Activated T-helper 1 cell treated with anti-CD3 and anti-CD28 coated beads, Interleukin-12 subunit alpha, Interleukin-12 subunit beta, Interleukin-2, Interleukin-4 antibody, amounts not matched to agents 30 ng/mL and 10 ng/mL and 1 ng/mL, durations not matched to agents 14 hours and 24 hours and 36 hours (primary cell): ENCODE measurements at regions of chr19 and their contacts with region 1.

Region 1: DNA sequence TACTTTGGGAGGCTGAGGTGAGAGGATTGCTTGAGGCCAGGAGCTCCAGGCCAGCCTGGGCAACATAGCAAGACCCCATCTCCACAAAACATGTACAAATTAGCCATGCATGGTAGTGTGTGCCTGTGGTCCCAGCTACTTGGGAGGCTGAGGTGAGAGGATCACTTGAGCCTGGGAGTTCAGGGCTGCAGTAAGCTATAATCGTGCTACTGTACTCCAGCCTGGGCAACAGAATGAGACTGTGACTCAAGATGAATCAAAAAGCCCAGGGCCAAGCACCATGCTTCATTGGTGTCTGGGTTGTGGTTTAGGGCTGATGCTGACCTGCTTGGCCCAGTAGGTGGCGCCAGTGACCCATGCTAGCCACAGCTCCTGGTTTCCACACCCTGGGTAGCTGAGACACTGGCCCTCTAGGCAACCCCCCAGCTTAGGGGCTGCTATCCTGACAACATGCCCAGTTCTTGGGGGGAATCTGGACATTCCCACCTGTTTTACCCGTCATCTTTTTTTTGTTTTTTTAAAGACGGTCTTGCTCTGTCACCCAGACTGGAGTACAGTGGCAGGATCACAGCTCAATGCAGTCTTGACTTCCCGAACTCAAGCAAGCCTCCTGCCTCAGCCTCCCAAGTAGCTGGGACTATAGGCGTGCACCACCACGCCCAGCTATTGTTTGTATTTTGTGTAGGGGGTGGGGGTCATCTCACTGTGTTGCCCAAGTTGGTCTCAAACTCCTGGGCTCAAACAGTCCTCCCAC is 5.5 kb downstream of the CCDC124 start:
- DNase-seq: peak; percentile 71
- H3K4me3 Mint-ChIP-seq: no peak overlapping the region
- H3K27ac Mint-ChIP-seq: no peak overlapping the region
- H3K4me1 Mint-ChIP-seq: peaks cover 8% of the 10 kb centered on the region
- H3K27me3 Mint-ChIP-seq: peaks cover 2% of the 10 kb centered on the region

Region 2: DNA sequence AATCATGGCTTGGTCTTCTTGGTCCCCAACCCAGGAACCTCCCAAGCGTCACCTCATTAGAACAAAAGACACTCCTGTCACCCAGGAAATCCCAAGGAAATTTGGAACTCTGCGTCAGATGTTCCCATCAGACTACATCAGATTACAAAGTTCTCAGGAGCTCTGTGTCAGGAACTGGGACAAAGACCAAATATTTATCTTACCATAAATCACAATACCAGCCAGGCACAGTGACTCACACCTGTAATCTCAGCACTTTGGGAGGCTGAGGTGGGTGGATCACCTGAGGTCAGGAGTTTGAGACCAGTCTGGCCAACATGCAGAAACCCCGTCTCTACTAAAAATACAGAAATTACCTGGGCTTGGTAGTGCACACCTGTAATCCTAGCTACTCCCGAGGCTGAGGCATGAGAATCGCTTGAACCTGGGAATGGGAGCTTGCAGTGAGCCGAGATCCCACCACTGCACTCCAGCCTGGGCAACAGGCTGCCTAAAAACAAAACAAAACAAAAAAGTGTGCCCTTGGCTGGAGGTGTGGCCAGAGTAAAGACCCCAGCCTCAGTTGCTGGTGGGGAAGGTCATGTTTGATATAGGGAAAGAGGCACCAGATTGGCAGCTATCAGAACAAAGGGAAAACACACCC is 22.2 kb before region 1 on chr19:
- intact Hi-C with region 1: no loop called
- DNase-seq: no peak
- H3K4me3 Mint-ChIP-seq: no peak overlapping the region
- H3K27ac Mint-ChIP-seq: no peak overlapping the region
- H3K4me1 Mint-ChIP-seq: no peaks in the 10 kb centered on the region
- H3K27me3 Mint-ChIP-seq: peaks cover 3% of the 10 kb centered on the region

Region 3: DNA sequence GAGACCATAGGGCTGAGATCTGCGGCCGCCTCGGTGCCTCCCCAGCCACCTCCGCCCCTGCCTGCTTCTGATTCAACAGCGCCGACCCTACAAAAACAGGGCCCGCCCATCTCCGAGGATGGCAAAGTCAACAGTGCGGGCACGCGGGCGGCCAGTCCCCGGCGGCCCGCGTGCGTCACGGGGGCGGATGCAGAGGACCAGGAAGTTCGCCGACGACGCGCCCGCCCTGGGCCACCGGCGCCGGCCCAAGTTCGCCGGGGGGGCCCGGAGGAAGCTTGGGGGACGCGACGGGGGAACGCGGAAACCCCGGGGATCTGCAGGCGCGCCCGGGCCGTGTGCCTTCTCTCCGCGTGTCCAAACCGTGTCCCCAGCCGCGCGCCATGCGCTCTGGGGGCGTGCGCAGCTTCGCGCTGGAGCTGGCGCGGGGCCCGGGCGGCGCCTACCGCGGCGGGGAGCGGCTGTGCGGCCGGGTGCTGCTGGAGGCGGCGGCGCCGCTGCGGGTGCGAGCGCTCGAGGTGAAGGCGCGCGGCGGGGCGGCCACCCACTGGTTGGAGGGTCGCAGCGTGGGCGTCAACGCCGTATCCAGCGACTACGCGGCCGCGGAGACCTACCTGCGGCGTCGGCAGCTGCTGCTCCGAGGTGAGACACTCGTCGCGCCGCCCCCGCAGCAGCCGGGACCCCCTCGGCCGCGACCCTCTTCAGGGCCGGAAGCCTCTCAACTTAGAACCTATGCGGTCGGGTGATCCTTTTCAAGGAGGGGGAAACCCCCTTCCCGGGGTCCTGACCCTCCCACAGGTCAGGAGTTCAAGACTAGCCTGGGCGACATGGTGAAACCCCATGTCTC is 62.9 kb after region 1 on chr19:
- intact Hi-C with region 1: loop called (anchors 1 kb)
- DNase-seq: peak; percentile 86
- H3K4me3 Mint-ChIP-seq: peak overlapping the region; percentile 92
- H3K27ac Mint-ChIP-seq: peak overlapping the region; percentile 95
- H3K4me1 Mint-ChIP-seq: peaks cover 27% of the 10 kb centered on the region
- H3K27me3 Mint-ChIP-seq: peaks cover 2% of the 10 kb centered on the region

Region 4: GRCh38 chr19:18058208-18059030 is 120.2 kb after region 1 on chr19:
- intact Hi-C with region 1: loop called (anchors 1 kb)
- DNase-seq: peak; percentile 74
- H3K4me3 Mint-ChIP-seq: no peak overlapping the region
- H3K27ac Mint-ChIP-seq: peak overlapping the region; percentile 52
- H3K4me1 Mint-ChIP-seq: peaks cover 17% of the 10 kb centered on the region
- H3K27me3 Mint-ChIP-seq: no peaks in the 10 kb centered on the region